Heart right ventricle (tissue), 16 donors: ENCODE measurements at regions of chr15 and their contacts with region 1.

Region 1: GRCh38 chr15:68383161-68384074 is 48.5 kb downstream of the ITGA11 start:
- DNase-seq: peak in 1 of 2 donors; percentile 46
- ATAC-seq: peak in 6 of 8 donors; percentile 50 to 72 (median 62)
- H3K4me3 ChIP-seq: no peak overlapping the region
- H3K27ac ChIP-seq: no peak overlapping the region
- H3K4me1 ChIP-seq: peaks cover 0 to 11% (median 0%) of the 10 kb centered on the region in 9 donors
- H3K27me3 ChIP-seq: peaks cover 0 to 5% (median 0%) of the 10 kb centered on the region in 7 donors
- CTCF ChIP-seq: peak; percentile 64 to 88 (median 81)

Region 2: DNA sequence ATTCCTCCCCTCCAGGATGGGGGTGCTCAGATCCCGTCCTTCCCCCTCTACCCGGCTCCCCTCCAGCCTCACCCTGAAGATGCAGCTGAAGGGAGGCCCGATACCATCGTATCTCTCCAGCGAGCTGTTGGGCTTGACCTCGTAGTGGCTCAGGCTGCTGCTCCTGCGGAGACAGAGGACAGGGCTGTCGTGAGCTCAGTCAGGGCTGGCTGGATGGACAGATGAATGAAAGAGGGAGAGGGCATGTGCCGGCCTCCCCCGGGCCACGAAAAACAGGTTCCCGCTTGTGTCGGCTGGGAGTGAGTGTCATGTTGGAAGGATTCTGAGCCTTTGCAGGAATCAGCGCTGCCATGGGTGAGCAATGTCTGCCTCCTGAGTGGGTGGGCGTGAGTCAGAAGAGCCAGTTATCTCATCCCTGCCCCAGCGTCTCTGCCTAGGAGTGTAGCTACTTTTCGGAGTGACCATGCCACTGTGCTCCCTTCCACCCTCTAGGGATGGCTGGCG is 70.7 kb before region 1 on chr15:
- intact Hi-C with region 1: loop called in 8 of 10 experiments (anchors 1 to 5 kb)
- DNase-seq: no peak
- ATAC-seq: no peak
- H3K4me3 ChIP-seq: no peak overlapping the region
- H3K27ac ChIP-seq: no peak overlapping the region
- H3K4me1 ChIP-seq: peaks cover 0 to 29% (median 15%) of the 10 kb centered on the region in 9 donors
- H3K27me3 ChIP-seq: peaks cover 0 to 3% (median 0%) of the 10 kb centered on the region in 7 donors
- CTCF ChIP-seq: no peak

Region 3: DNA sequence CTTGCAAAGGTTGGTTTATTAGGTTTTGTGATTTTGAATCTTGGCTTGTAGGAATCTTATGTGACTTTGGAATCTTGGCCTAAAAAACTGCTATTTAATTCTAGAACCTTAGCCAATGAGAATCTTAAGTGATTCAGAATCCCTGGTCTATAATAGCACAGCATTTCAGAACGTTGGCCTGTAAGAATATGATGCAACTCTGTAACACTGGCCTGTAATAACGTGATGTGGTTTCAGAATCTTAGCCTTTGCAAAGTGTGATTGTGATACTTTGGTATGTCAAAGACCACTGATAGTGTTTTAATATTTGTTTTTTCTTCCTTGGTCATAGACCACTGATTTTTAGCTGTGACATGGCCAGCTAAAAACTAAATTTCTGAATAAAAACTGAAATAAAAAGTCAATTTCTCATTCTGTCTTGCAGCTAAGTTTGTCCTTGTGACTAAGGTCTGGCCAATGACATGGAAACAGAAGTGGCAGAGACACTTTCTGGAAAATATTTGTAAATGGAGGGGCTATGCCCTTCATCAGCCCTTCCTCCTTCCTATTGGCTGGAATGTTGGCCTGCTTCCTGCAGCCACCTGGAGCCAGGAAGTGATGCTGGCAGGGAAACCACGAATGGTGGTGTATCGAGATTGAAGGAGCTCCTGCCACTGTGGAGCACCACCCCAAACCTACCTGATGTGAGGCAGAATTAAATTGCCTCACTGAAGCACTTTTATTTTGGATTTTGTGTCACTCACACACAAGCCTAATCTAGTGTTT is 153.1 kb after region 1 on chr15:
- intact Hi-C with region 1: no loop called
- DNase-seq: no peak
- ATAC-seq: peak in 1 of 8 donors; percentile 87
- H3K4me3 ChIP-seq: no peak overlapping the region
- H3K27ac ChIP-seq: peak overlapping the region in 2 of 10 donors; percentile 22 to 43
- H3K4me1 ChIP-seq: no peaks in the 10 kb centered on the region
- H3K27me3 ChIP-seq: no peaks in the 10 kb centered on the region
- CTCF ChIP-seq: no peak